ENCODE measurements at regions of chr4 and their contacts with region 1.

Region 1: DNA sequence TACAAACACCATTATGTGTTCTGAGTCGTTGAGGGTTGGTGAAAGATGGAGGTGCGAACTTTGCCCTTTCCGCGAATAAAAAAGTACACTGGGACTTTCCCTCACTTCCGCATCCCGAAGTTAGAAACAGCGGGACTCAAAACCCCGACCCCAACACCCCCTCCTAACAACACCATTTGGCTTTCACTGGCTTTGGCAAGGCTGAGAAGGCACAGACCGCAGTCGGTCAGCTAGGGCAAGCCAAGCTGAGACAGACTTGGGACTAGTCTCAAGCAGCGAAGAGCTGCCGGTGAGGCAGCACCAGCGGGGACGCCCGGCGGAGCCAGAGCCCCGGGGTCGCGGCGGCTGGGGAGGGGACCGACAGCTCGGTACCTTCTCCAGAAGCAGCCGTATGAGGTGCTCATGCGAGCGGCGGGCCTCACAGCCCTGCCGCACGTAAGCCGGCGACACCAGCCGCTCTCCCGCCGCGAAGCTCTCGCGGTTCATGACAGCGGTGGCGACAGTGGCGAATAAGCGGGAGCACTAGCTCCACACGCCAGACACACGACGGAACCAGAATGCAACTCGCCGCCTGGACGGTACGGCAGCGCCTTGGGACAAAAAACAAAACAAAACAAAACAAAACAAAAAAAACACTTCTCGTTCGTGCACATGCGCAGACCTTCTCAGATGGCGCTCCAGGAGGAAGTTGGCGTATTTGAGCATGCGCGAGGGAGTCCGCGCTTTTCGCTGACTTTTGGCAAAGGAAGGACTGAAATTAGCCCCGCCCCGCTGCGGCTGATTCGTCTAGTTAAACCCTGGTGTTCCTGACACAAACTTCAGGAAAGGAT is at the start of gene SEPSECS:
- DNase-seq: peak; percentile 95 to 97 (median 97)
- H3K4me3 ChIP-seq: peak within 1 kb of the TSS; percentile 62 to 93 (median 92)
- H3K4me3 Mint-ChIP-seq: peak within 1 kb of the TSS; percentile 86 to 96
- H3K27ac ChIP-seq: peak within 1 kb of the TSS; percentile 98
- H3K27ac Mint-ChIP-seq: peak within 1 kb of the TSS; percentile 90 to 99 (median 98)
- H3K4me1 ChIP-seq: peaks cover 31 to 41% of the 10 kb centered on the region in 2 donors
- H3K4me1 Mint-ChIP-seq: peaks cover 45% of the 10 kb centered on the region
- H3K27me3 ChIP-seq: no peaks in the 10 kb centered on the region
- H3K27me3 Mint-ChIP-seq: peaks cover 0 to 4% (median 0%) of the 10 kb centered on the region in 3 donors
- CTCF ChIP-seq: no peak
- polyA plus RNA-seq, gene SEPSECS: 0.65 to 5.8 (median 2.1) TPM

Region 2: DNA sequence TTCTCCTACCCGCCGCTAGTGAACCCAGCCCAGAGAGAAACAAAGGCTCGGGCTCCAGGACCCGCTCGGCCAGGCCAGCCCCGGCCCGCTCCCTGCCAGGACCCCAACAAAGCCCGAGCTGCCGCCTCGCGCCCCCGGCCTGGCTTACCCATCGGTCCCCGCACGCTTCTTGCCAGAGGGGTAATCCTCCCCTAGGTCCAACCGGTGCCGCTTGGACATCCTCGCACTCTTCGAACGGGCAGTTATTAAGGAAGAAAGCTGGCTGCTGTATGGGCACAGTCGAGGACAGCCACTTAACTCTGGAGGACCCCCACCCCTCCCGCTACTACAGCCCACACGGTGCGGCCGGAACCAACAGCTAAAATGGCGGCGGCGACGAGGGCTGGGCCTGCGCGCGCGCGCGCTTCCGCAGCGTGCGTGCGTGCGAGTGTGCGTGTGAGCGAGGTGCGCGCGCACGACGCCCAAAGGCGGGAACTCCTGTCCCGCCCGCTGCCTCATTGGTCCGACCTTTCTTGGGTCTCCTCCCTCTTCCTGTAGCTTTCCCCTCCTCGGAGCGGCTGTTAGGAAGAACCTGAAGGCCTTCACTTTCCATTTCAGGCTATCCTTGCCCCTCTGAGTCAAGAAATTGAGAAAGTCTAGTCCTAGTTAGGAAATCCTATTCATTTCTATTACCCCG is 575.8 kb before region 1 on chr4 and contains the start of gene DHX15:
- intact Hi-C with region 1: loop called in 1 of 2 experiments (anchors 5 kb)
- DNase-seq: peak; percentile 98 to 99 (median 99)
- H3K4me3 ChIP-seq: peak within 1 kb of the TSS; percentile 80 to 88 (median 83)
- H3K4me3 Mint-ChIP-seq: peak within 1 kb of the TSS; percentile 96 to 99
- H3K27ac ChIP-seq: peak within 1 kb of the TSS; percentile 77 to 97
- H3K27ac Mint-ChIP-seq: peak within 1 kb of the TSS; percentile 91 to 99 (median 96)
- H3K4me1 ChIP-seq: peaks cover 19 to 26% of the 10 kb centered on the region in 2 donors
- H3K4me1 Mint-ChIP-seq: peaks cover 33% of the 10 kb centered on the region
- H3K27me3 ChIP-seq: no peaks in the 10 kb centered on the region
- H3K27me3 Mint-ChIP-seq: no peaks in the 10 kb centered on the region
- CTCF ChIP-seq: no peak
- polyA plus RNA-seq, gene DHX15: 27.2 to 77.7 (median 37.5) TPM

Region 3: GRCh38 chr4:24980064-24980690 is 179.9 kb before region 1 on chr4:
- intact Hi-C with region 1: loop called in 1 of 2 experiments (anchors 10 kb)
- DNase-seq: peak; percentile 78 to 96 (median 86)
- H3K4me3 ChIP-seq: peak overlapping the region; percentile 35 to 92 (median 70)
- H3K4me3 Mint-ChIP-seq: peak overlapping the region; percentile 70 to 86
- H3K27ac ChIP-seq: peak overlapping the region; percentile 73 to 83
- H3K27ac Mint-ChIP-seq: peak overlapping the region; percentile 90 to 97 (median 97)
- H3K4me1 ChIP-seq: peaks cover 55 to 59% of the 10 kb centered on the region in 2 donors
- H3K4me1 Mint-ChIP-seq: peaks cover 53% of the 10 kb centered on the region
- H3K27me3 ChIP-seq: no peaks in the 10 kb centered on the region
- H3K27me3 Mint-ChIP-seq: peaks cover 0 to 2% (median 1%) of the 10 kb centered on the region in 3 donors
- CTCF ChIP-seq: peak; percentile 89

Region 4: DNA sequence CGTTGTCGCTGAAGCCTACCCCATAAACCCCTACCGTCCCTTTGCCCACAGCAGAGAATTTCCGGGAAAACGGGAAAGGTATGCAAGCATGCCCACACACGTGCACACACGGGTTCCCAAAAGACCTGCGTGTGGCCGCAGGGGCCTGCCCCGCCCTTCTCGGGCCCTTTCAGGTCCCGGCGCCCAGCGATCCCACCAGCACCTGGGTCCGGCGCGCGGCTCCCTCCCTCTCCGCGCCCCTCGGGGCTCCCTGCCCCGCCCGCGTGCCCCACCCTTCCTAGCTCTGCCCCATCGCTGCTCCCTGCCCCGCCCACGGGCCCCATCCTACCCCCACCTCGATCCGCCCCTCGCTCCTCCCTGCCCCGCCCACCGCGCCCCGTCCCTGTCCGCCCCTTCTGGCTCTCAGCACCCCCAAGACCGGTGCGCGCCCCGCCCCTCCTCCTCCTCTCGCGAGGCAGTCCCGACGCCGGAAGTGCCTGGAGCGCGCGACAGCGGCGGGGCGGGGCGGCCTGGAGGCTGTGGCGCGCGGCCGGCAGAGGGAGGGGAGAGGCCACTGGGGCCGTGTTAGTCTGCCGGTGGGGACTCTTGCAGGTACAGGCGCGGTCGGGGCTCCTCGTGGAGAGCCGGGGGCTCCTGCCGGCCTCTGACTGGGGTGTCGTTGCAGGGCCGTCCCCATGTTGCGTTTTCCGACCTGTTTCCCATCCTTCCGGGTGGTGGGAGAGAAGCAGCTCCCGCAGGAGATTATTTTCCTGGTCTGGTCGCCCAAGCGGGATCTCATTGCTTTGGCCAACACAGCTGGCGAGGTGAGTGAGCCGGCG is 216.9 kb after region 1 on chr4 and contains the start of gene ANAPC4:
- intact Hi-C with region 1: loop called in 1 of 2 experiments (anchors 10 kb)
- DNase-seq: peak; percentile 77 to 81 (median 78)
- H3K4me3 ChIP-seq: peak within 1 kb of the TSS; percentile 94 to 97 (median 96)
- H3K4me3 Mint-ChIP-seq: peak within 1 kb of the TSS; percentile 86 to 96
- H3K27ac ChIP-seq: peak within 1 kb of the TSS; percentile 26 to 77
- H3K27ac Mint-ChIP-seq: peak within 1 kb of the TSS; percentile 58 to 88 (median 77)
- H3K4me1 ChIP-seq: peaks cover 15 to 16% of the 10 kb centered on the region in 2 donors
- H3K4me1 Mint-ChIP-seq: peaks cover 12% of the 10 kb centered on the region
- H3K27me3 ChIP-seq: no peaks in the 10 kb centered on the region
- H3K27me3 Mint-ChIP-seq: peaks cover 0 to 9% (median 2%) of the 10 kb centered on the region in 3 donors
- CTCF ChIP-seq: no peak
- polyA plus RNA-seq, gene ANAPC4: 12.7 to 22.9 (median 15.1) TPM

Measured in CD14-positive monocyte (primary cell).